PC-3 (cell line): ENCODE measurements at regions of chr15 and their contacts with region 1.

Region 1: DNA sequence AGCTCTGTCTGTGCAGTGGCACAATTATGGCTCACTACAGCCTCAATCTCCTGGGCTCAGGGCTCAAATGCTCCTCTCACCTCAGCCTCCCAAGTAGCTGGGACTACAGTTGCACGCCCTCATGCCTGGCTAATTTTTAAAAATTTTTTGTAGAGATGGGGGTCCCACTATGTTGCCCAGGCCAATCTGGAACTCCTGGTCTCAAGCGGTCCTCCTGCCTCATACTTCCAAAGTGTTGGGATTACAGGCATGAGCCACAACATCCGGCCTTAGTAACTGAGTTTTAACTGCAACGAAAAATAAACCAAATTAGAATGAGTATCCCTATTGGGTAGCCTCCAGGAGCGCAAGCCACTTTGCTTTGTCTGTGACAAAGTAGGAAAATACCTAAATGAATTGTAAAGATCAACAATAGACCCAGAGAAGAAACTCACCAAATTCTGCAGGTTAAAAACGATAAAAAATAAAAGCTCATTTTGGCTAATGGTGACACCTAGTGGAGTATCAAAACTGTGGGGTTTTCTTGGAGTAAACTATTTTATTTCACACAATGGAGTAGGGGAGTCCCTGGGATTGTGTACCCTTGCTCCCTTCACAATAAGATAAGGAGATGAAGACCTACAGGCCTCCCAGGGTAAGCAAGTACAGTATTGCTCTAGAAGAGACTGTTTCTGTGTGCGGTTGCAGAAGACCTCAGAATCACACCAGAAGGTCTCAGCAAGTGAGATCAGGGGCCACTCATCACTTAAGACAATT is 21.0 kb upstream of the CA12 start:
- DNase-seq: peak; percentile 70
- ATAC-seq: peak; percentile 66
- H3K4me3 ChIP-seq: no peak overlapping the region
- H3K27ac ChIP-seq: no peak overlapping the region
- H3K4me1 ChIP-seq: 0 out of 2 replicates have a peak, but pooled peaks cover 3% of the 10 kb centered on the region
- H3K27me3 ChIP-seq: no peaks in the 10 kb centered on the region
- CTCF ChIP-seq: peak; percentile 73

Region 2: DNA sequence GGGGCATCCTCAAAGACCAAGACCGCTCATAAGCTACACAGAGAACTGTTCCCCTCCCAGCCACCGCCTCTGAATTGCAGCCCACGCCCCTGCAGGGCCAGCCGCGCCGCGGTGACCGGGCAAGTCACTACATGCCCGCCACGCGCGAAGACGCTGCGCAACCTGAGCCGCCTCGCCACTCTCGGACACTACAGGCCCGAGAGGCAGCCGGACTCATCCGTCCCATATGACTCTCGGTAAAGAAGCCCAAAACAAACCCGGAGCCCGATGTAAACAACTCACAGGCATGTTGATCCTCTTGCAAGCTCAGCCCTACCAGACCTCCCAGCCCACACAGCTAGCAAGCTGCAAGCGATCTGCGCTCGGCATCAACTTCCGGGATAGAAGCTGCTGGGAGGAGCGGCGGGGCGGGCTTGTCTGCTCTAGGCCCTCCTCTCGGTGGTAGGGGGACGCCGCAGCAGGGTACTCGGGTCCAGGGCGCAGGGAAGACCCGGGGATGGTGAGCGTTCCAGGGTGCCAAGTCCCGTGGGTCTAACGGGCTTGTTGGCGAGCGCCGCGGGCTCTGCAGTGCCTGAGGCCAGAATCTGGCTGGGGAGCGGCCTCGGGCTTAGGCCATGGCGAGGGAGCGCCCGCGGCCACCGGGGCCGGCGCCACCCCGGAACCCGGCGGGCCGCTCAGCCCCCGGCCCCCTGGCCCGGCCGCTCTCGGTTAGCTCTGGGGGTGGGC is 245.4 kb before region 1 on chr15 and contains the start of gene RPS27L:
- CTCF ChIA-PET with region 1: no interaction called
- POLR2A ChIA-PET with region 1: no interaction called
- intact Hi-C with region 1: loop called (anchors 5 kb)
- DNase-seq: peak; percentile 82
- ATAC-seq: peak; percentile 91
- H3K4me3 ChIP-seq: peak within 1 kb of the TSS; percentile 84
- H3K27ac ChIP-seq: peak within 1 kb of the TSS; percentile 51
- H3K4me1 ChIP-seq: peaks cover 13% of the 10 kb centered on the region
- H3K27me3 ChIP-seq: no peaks in the 10 kb centered on the region
- CTCF ChIP-seq: no peak
- total RNA-seq, gene RPS27L: 33.9 and 48.5 TPM in 2 replicates

Region 3: DNA sequence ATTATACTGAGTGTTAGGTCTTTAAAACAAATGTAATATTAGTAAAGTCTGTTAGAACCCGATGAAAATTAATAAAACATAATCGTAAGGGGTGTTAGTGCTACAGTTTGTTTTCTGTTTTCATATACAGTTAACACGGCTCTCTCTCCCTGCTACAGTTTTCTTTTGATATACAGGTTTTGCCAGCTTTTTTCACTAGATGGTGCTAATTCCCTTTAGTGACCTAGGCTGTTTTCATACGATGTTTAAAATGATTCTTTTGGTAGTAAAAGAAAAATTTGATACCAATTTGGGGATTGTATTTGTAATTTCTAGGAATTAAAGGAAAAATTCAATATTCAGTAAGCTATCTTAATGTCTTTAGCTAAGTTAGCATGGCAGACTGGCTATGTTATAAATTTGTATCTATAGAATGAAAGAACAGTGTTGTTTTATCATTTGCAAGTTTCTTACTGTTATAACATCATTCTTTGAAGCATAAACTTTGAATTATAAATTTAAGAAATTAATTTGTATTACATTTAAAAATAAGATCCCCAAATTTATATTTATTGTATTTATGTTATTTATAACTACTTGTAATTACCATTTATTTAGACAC is 113.8 kb before region 1 on chr15:
- CTCF ChIA-PET with region 1: interaction called, 12 read pairs
- POLR2A ChIA-PET with region 1: no interaction called
- intact Hi-C with region 1: loop called (anchors 1 kb)
- DNase-seq: peak; percentile 69
- ATAC-seq: no peak
- H3K4me3 ChIP-seq: no peak overlapping the region
- H3K27ac ChIP-seq: no peak overlapping the region
- H3K4me1 ChIP-seq: peaks cover 5% of the 10 kb centered on the region; the same call in 1 of the 2 replicates
- H3K27me3 ChIP-seq: no peaks in the 10 kb centered on the region
- CTCF ChIP-seq: peak; percentile 82

Region 4: GRCh38 chr15:63466378-63467192 is 63.9 kb after region 1 on chr15:
- CTCF ChIA-PET with region 1: no interaction called
- POLR2A ChIA-PET with region 1: no interaction called
- intact Hi-C with region 1: loop called (anchors 10 kb)
- DNase-seq: peak; percentile 72
- ATAC-seq: peak; percentile 55
- H3K4me3 ChIP-seq: no peak overlapping the region
- H3K27ac ChIP-seq: no peak overlapping the region
- H3K4me1 ChIP-seq: peaks cover 21% of the 10 kb centered on the region
- H3K27me3 ChIP-seq: no peaks in the 10 kb centered on the region
- CTCF ChIP-seq: peak; percentile 75

Region 5: DNA sequence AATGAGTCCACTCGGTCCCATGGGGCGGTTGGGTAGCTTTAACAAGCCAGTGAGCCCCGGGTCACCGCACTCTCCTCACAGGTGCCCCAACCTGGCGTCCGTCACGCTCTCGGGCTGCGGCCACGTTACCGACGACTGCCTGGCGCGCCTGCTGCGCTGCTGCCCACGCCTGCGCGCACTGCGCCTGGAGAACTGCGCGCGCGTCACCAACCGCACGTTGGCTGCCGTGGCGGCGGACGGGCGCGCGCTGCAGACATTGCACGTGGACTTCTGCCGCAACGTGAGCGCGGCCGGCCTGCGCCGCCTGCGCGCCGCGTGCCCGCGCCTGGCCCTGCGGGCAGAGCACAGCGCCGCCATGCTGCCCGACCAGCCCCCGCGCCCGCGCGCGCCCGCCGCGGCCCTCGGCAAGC is 197.9 kb after region 1 on chr15:
- CTCF ChIA-PET with region 1: no interaction called
- POLR2A ChIA-PET with region 1: no interaction called
- intact Hi-C with region 1: loop called (anchors 5 kb)
- DNase-seq: peak; percentile 90
- ATAC-seq: peak; percentile 72
- H3K4me3 ChIP-seq: peak overlapping the region; percentile 94
- H3K27ac ChIP-seq: peak overlapping the region; percentile 5; the same call in 1 of the 2 replicates
- H3K4me1 ChIP-seq: peaks cover 7% of the 10 kb centered on the region; the same call in 1 of the 2 replicates
- H3K27me3 ChIP-seq: no peaks in the 10 kb centered on the region
- CTCF ChIP-seq: no peak